Mammary epithelial cell (primary cell): ENCODE measurements at regions of chr2 and their contacts with region 1.

Region 1: DNA sequence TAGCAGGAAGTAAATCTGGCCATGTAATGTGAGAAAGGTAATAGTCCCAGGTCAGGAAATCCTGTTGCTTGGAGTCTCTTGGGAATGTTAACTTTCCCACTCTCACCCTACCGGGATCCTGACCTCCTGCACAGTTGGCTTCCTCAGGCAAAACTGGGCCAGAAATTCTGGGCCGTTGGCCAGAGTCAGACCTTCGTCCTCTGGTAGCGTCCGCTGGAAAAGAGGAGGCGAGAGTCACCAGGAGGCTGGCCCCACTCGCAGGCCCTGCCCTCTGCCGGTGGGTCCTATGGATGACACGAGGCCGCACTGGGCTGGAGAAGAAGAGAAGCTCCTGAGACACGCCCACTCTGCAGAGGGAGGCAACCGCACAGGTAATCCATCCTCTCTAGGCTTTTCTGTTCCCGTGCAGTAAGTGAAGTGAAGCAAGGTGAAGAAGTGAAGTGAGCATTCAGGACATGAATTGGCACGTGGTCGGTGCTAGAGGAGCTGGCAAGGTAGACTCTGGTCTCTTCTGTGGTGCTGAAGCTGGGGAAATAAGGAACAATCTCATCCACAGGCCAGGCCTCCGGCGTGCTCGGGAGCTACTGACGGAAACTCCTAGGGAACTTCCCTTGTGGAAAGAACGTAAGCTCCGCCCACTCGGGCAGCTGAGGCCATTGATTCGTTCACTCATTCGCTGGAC is 182.7 kb upstream of the GLI2 start:
- DNase-seq: peak; percentile 81
- H3K4me3 ChIP-seq: no peak overlapping the region
- H3K27ac ChIP-seq: no peak overlapping the region
- H3K4me1 ChIP-seq: no peaks in the 10 kb centered on the region
- H3K27me3 ChIP-seq: no peaks in the 10 kb centered on the region
- CTCF ChIP-seq: peak; percentile 70 to 88

Region 2: DNA sequence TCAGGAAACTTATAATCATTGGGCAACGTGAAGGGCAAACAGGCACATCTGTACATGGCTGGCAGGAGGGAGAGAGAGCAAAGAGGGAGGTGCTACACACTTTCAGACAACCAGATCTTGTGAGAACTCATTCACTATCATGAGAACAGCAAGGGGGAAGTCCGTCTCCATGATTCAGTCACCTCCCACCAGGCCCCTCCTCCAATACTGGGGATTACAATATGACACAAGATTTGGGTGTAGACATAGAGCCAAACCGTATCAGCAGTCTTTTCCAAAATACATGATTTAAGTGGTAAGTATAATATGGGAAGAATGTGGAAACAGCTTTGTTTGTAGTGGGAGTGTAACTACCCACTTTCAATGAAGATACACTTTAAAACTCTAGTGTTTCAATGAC is 475.0 kb before region 1 on chr2:
- CTCF ChIA-PET with region 1: no interaction called
- dilution Hi-C with region 1: no loop called
- in situ Hi-C with region 1: no loop called
- intact Hi-C with region 1: no loop called
- DNase-seq: peak; percentile 9
- H3K4me3 ChIP-seq: no peak overlapping the region
- H3K27ac ChIP-seq: no peak overlapping the region
- H3K4me1 ChIP-seq: no peaks in the 10 kb centered on the region
- H3K27me3 ChIP-seq: no peaks in the 10 kb centered on the region
- CTCF ChIP-seq: no peak

Region 3: DNA sequence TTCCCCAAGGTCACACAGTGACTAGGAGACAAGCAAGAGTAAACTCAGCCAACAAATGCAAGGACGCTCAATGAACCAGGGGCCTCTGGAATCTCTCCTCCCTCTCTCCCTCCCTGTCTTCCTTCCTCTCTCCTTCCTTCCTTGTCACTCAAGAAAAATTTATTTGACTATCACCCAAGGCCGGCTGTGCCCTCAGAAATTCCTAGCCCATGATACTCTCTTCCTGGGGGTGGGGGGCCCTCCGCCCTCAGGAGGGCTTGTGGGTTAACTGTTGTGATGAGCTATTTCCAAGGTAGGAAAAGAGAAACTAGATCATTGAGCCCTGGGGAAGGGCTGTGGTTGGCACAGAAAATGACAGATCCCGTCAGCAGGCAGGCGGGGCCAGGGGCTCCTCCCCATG is 185.3 kb before region 1 on chr2:
- CTCF ChIA-PET with region 1: no interaction called
- dilution Hi-C with region 1: no loop called
- in situ Hi-C with region 1: no loop called
- intact Hi-C with region 1: no loop called
- DNase-seq: peak; percentile 21
- H3K4me3 ChIP-seq: no peak overlapping the region
- H3K27ac ChIP-seq: no peak overlapping the region
- H3K4me1 ChIP-seq: peaks cover 2% of the 10 kb centered on the region
- H3K27me3 ChIP-seq: no peaks in the 10 kb centered on the region
- CTCF ChIP-seq: no peak

Region 4: GRCh38 chr2:120436885-120437603 is 115.9 kb before region 1 on chr2:
- CTCF ChIA-PET with region 1: interaction called, 5 read pairs
- dilution Hi-C with region 1: no loop called
- in situ Hi-C with region 1: no loop called
- intact Hi-C with region 1: loop called (anchors 5 kb)
- DNase-seq: peak; percentile 54
- H3K4me3 ChIP-seq: no peak overlapping the region
- H3K27ac ChIP-seq: no peak overlapping the region
- H3K4me1 ChIP-seq: peaks cover 4% of the 10 kb centered on the region
- H3K27me3 ChIP-seq: peaks cover 5% of the 10 kb centered on the region
- CTCF ChIP-seq: peak; percentile 66 to 74

Region 5: DNA sequence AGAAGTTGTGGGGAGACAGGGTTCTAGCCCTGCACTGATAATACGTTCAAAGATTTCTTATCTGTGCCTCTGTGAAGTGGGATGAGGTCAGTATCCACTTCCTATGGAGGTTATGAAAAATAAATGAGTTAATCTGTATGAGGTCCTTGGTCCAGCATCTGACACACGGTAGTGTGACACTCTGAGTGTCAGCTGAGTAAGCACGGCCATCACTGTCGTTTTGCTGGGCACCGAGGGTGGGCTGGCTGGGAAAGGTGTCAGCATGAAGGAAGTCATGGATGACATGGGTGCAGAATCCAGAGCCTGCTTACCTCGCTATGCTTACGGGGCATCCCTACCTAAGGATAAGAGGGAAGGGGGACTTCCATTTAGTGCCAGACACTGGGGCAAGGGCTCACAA is 56.7 kb before region 1 on chr2:
- CTCF ChIA-PET with region 1: no interaction called
- dilution Hi-C with region 1: no loop called
- in situ Hi-C with region 1: no loop called
- intact Hi-C with region 1: no loop called
- DNase-seq: no peak
- H3K4me3 ChIP-seq: no peak overlapping the region
- H3K27ac ChIP-seq: no peak overlapping the region
- H3K4me1 ChIP-seq: no peaks in the 10 kb centered on the region
- H3K27me3 ChIP-seq: peaks cover 3% of the 10 kb centered on the region
- CTCF ChIP-seq: no peak

Region 6: DNA sequence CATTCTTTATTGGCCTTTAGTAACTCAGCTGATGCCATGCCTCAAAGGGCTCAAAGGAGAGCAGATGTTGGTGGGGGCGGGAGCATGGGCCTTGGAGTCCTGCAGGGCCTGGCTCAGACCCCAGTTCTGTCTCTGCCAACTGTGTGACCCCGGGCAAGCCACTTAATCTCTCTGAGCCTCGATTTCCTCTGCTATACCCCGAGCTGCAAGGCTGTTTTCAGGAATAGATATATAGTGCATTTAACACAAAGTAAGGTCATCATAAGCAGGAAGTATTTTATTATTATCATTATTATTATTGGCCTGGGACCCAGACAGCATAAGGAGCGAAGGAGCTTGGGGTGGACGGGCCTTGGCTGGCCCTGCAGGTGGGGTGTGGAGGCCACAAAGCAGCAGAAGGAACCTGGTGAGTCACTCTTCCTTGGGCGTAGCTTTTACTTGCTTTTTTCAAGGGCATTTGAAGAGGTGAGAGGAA is 44.3 kb before region 1 on chr2:
- CTCF ChIA-PET with region 1: no interaction called
- dilution Hi-C with region 1: no loop called
- in situ Hi-C with region 1: no loop called
- intact Hi-C with region 1: loop called (anchors 5 kb)
- DNase-seq: peak; percentile 70
- H3K4me3 ChIP-seq: no peak overlapping the region
- H3K27ac ChIP-seq: no peak overlapping the region
- H3K4me1 ChIP-seq: peaks cover 20% of the 10 kb centered on the region
- H3K27me3 ChIP-seq: no peaks in the 10 kb centered on the region
- CTCF ChIP-seq: peak in 1 of 2 donors; percentile 43

Region 7: GRCh38 chr2:120620025-120620793 is 67.3 kb after region 1 on chr2:
- CTCF ChIA-PET with region 1: interaction called, 5 read pairs
- dilution Hi-C with region 1: no loop called
- in situ Hi-C with region 1: no loop called
- intact Hi-C with region 1: loop called (anchors 5 kb)
- DNase-seq: peak; percentile 94
- H3K4me3 ChIP-seq: no peak overlapping the region
- H3K27ac ChIP-seq: peak overlapping the region; percentile 91
- H3K4me1 ChIP-seq: peaks cover 18% of the 10 kb centered on the region
- H3K27me3 ChIP-seq: no peaks in the 10 kb centered on the region
- CTCF ChIP-seq: no peak